ENCODE measurements at regions of chr3 and their contacts with region 1.

Region 1: GRCh38 chr3:128170805-128171516 is 17.7 kb downstream of the EEFSEC start:
- DNase-seq: peak; percentile 67
- H3K4me3 ChIP-seq: no peak overlapping the region
- H3K27ac ChIP-seq: no peak overlapping the region
- H3K27me3 ChIP-seq: no peaks in the 10 kb centered on the region
- CTCF ChIP-seq: peak; percentile 98

Region 2: GRCh38 chr3:128270559-128271492 is 99.9 kb after region 1 on chr3:
- CTCF ChIA-PET with region 1: no interaction called
- POLR2A ChIA-PET with region 1: no interaction called
- DNase-seq: no peak
- H3K4me3 ChIP-seq: no peak overlapping the region
- H3K27ac ChIP-seq: no peak overlapping the region
- H3K27me3 ChIP-seq: no peaks in the 10 kb centered on the region
- CTCF ChIP-seq: no peak

Region 3: GRCh38 chr3:128322066-128323022 is 151.4 kb after region 1 on chr3:
- CTCF ChIA-PET with region 1: interaction called, 22 read pairs
- POLR2A ChIA-PET with region 1: no interaction called
- DNase-seq: peak; percentile 13
- H3K4me3 ChIP-seq: no peak overlapping the region
- H3K27ac ChIP-seq: no peak overlapping the region
- H3K27me3 ChIP-seq: no peaks in the 10 kb centered on the region
- CTCF ChIP-seq: peak; percentile 67

Region 4: DNA sequence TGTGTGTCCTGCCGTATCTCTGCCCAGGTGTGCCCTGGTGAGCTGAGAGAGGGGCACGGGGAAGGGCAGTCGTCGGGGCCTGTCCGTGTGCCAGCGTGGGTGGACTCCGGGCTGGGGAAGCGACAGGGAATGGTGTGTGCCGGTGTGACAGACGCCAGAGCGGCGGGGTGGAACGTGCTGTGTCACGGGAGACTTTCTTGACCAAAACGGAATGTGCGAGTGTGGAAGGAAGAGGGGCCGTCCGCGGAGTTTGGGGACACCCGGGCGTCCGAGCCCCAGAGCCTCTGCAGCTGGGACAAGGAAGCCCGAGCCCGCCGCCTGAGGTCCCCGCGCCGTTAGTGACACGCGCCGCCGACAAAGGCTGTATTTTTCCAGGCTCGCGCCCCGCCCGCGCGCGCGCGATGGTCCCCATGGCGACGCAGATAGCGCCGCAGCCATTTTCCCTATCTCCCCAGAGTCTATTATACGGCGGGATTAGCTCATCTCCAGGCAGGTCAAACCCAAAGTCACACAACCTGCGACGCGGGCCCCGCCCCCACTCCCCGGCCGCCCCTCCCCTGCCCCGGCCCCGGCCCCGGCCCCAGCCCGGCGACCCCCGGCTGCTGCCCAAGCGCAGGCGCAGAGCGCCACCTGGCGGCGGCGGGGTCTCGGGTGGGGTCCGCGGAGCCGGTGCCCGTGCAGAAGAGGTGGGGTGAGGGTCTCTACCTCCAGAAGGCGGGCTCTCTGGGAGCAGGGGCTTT is 326.6 kb after region 1 on chr3:
- CTCF ChIA-PET with region 1: interaction called, 10 read pairs
- POLR2A ChIA-PET with region 1: no interaction called
- DNase-seq: no peak
- H3K4me3 ChIP-seq: peak overlapping the region; percentile 64
- H3K27ac ChIP-seq: peak overlapping the region; percentile 2
- H3K27me3 ChIP-seq: peaks cover 6% of the 10 kb centered on the region
- CTCF ChIP-seq: peak; percentile 62

Region 5: GRCh38 chr3:129855454-129856419 is 1684.8 kb after region 1 on chr3:
- CTCF ChIA-PET with region 1: no interaction called
- POLR2A ChIA-PET with region 1: no interaction called
- DNase-seq: peak; percentile 6
- H3K4me3 ChIP-seq: no peak overlapping the region
- H3K27ac ChIP-seq: no peak overlapping the region
- H3K27me3 ChIP-seq: no peaks in the 10 kb centered on the region
- CTCF ChIP-seq: 0 out of 2 replicates have a peak, but pooled peaks have one; percentile 4

Measured in AG04450 (cell line).